Posterior vena cava (tissue), 2 donors: ENCODE measurements at regions of chr14 and their contacts with region 1.

Region 1: GRCh38 chr14:99884834-99885648 is 91.8 kb downstream of the EML1 start:
- DNase-seq: no peak

Region 2: GRCh38 chr14:99518441-99519346 is 366.3 kb before region 1 on chr14:
- intact Hi-C with region 1: loop called in 1 of 2 experiments (anchors 10 kb)
- DNase-seq: peak; percentile 92

Region 3: DNA sequence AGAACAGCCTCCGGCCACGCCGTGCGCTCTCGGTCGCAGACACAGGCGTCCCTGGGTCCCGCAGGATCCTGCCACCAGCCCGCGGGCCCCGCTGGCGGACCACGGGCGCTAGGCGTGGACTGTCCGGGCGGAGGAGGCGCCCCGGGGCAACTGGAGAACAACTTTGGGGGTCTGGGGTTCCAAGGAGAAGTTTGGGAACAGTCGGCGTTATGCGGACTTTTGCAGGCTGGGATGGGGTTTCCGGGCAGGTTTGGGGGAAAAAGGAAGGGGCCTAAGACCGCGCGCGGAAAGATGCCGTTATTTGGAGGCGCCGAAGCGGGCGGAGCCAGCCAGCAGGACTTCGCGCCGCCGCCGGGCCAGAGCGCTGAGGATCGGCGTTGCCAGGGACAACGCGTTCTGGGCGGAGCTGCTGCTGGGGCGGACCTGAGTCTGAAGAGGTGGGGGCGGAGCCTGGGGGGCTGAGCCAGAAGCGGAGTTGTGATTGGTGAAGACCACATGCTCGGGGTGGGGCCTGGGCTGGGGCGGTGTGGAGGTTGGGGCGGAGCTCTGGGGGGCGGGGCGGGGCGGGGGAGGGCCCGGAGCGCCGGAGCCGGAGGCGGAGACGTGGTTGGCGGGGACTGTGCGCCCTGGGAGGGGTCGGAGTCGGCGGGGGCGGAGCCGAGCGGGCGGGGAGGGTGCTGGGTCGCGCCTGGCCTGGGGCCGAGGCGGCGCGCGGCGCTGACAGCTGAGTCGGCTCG is 201.3 kb before region 1 on chr14 and contains the start of gene CYP46A1:
- intact Hi-C with region 1: loop called in 1 of 2 experiments (anchors 5 kb)
- DNase-seq: peak; percentile 100
- total RNA-seq, gene CYP46A1: 1.3 TPM